ENCODE measurements at regions of chr12 and their contacts with region 1.

Region 1: DNA sequence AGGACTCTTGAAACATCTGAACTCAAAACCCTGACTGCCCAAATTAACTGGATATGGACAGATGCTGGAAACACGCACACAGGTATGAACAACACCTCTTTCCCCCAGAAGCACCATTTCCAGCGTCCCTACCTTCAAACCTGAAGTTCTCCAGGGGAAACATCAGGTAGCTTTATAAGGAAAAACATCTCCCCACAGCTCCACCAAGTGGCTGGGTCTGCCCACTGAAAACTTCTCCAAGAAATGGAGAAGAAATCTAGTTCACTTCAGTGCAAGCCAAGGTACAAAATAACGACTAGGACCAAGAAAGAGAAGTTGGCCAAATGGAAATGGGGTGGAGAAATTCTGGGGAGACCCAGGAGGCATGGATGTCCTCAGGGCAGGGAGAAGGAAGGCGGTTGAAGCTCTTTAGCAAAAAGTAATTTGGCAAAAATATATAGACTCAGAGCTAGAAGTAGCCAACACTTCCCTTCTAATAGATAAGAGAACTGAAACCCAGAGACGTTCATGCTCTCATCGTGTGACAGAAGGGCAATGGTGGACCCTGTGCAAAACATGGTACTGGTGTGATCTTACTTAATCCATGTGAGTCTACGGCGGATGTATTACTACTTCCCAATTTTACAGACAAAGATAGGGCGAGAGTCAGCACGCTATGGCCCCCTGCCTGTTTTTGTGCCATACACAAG is 10.5 kb upstream of the NUAK1 start:
- DNase-seq: peak; percentile 59
- H3K4me3 ChIP-seq: no peak overlapping the region
- H3K27ac ChIP-seq: no peak overlapping the region
- H3K4me1 ChIP-seq: peaks cover 17% of the 10 kb centered on the region
- H3K27me3 ChIP-seq: no peaks in the 10 kb centered on the region
- CTCF ChIP-seq: peak; percentile 55 to 68
- POLR2A ChIP-seq: no peak

Region 2: DNA sequence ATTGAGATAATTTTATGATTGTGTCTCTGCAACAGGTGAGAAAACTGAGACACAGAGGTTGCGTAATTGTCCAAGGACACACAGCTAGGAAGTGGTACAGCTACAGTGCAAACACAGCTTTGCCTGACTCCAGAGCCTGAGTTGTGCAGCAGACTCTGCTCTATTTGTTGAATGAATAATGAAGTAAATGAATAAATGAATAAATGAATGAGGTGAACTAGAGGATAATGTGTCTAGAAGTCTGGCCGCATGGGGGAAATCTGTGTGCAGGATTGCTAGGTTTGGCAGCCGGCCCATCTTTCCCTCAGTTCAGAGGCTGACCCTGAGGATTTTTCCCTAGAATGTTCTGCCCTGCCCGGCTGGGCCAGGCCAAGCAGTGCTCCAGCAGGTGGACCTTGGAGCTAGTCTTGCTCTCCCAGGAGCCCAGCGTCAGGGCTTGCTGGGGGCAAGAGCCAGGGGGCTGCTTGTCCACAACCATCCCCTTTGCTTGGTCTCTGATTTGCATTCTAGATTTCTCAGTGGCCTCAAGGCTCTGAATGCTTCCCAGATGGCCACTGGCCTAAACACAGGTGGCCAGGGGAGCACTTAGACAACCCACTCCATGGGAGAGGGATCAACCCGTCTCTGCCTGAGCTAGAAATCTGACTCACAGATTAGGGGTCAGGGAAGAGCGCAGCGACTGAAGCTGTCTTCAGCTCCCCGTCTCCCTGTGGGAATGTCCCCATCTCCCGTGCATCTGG is 593.5 kb before region 1 on chr12:
- CTCF ChIA-PET with region 1: interaction called, 11 read pairs
- POLR2A ChIA-PET with region 1: no interaction called
- dilution Hi-C with region 1: no loop called
- intact Hi-C with region 1: no loop called
- DNase-seq: peak; percentile 63
- H3K4me3 ChIP-seq: no peak overlapping the region
- H3K27ac ChIP-seq: peak overlapping the region; percentile 9
- H3K4me1 ChIP-seq: peaks cover 32% of the 10 kb centered on the region
- H3K27me3 ChIP-seq: no peaks in the 10 kb centered on the region
- CTCF ChIP-seq: no peak
- POLR2A ChIP-seq: no peak

Region 3: DNA sequence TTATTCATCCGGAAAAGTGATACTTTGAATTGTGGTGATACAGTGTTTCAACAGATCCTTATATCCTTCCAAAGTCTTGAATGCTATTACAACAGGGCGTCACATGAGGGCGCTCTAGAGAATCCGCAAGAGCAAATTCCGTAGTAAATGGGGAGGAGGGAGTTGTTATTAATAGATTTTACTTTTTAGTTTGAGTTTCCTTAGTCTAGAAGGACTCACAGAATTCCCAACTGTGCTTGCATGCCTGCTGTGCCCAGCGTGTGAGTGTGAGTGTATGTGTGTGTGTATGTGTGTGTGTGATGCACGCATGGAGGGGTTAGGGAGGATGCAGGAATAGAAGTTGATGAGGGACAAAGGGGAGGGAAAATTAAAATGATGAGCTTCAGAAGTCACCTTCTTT is 443.5 kb before region 1 on chr12:
- CTCF ChIA-PET with region 1: interaction called, 26 read pairs
- POLR2A ChIA-PET with region 1: no interaction called
- dilution Hi-C with region 1: no loop called
- intact Hi-C with region 1: no loop called
- DNase-seq: peak; percentile 77
- H3K4me3 ChIP-seq: no peak overlapping the region
- H3K27ac ChIP-seq: no peak overlapping the region
- H3K4me1 ChIP-seq: peaks cover 9% of the 10 kb centered on the region
- H3K27me3 ChIP-seq: peaks cover 4 to 7% of the 10 kb centered on the region in 2 experiments
- CTCF ChIP-seq: peak; percentile 63 to 65
- POLR2A ChIP-seq: no peak

Region 4: DNA sequence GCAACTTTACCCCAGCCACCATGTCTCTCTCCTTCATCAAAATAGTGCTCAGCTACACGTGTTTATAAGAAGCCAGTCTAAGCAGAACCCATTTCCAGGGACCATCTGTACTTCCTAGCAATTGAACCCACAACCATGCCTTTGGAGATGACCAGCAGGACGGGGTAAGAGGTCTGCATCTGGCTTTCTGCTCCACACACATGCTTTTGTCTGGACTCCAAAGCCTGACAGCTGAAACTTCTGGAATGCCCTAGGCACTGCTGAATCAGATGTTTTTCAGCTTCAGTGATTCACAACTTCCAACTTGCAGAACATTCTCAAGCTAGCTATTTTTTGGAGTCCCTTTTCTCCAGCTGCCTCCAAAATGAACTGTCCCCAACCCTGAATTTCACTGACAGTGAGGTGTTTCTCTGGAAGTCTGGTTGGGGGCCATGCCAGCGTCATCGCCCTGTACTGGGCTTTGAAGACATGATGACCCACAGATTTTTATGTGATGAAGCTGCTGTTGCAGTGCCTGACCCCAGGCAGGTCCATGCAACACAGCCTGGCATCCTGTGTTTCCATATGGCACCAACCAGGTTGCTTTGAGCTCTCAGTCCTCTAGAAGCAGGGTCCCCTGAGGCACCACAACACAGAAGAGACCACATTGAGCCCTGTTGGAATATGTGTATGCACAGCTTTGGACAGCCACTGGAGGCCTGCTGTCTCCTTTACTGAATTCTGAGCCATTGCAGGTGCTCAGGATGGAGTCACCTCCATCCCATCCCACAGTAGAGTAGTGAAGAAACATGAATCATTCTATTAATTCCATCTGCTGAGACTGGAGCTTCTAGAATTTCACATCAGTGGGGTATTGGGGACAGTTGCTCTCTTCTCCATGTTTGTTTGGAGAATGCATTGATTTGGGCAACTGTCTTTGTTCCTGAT is 90.7 kb before region 1 on chr12:
- CTCF ChIA-PET with region 1: no interaction called
- POLR2A ChIA-PET with region 1: no interaction called
- dilution Hi-C with region 1: no loop called
- intact Hi-C with region 1: no loop called
- DNase-seq: no peak
- H3K4me3 ChIP-seq: no peak overlapping the region
- H3K27ac ChIP-seq: no peak overlapping the region
- H3K4me1 ChIP-seq: peaks cover 12% of the 10 kb centered on the region
- H3K27me3 ChIP-seq: no peaks in the 10 kb centered on the region
- CTCF ChIP-seq: no peak
- POLR2A ChIP-seq: no peak

Region 5: GRCh38 chr12:106357549-106358395 is 208.5 kb after region 1 on chr12 and contains the start of gene POLR3B:
- CTCF ChIA-PET with region 1: no interaction called
- POLR2A ChIA-PET with region 1: no interaction called
- dilution Hi-C with region 1: no loop called
- intact Hi-C with region 1: no loop called
- DNase-seq: peak; percentile 97
- H3K4me3 ChIP-seq: peak within 1 kb of the TSS; percentile 52 to 92 (median 87)
- H3K27ac ChIP-seq: peak within 1 kb of the TSS; percentile 64
- H3K4me1 ChIP-seq: peaks cover 12% of the 10 kb centered on the region
- H3K27me3 ChIP-seq: peaks cover 0 to 4% of the 10 kb centered on the region in 2 experiments
- CTCF ChIP-seq: peak; percentile 86 to 89
- POLR2A ChIP-seq: peak; percentile 90
- total RNA-seq, gene POLR3B: 10.1 and 12.3 TPM in 2 replicates

Measured in endothelial cell of umbilical vein (primary cell).